ENCODE measurements at regions of chr19 and their contacts with region 1.

Region 1: DNA sequence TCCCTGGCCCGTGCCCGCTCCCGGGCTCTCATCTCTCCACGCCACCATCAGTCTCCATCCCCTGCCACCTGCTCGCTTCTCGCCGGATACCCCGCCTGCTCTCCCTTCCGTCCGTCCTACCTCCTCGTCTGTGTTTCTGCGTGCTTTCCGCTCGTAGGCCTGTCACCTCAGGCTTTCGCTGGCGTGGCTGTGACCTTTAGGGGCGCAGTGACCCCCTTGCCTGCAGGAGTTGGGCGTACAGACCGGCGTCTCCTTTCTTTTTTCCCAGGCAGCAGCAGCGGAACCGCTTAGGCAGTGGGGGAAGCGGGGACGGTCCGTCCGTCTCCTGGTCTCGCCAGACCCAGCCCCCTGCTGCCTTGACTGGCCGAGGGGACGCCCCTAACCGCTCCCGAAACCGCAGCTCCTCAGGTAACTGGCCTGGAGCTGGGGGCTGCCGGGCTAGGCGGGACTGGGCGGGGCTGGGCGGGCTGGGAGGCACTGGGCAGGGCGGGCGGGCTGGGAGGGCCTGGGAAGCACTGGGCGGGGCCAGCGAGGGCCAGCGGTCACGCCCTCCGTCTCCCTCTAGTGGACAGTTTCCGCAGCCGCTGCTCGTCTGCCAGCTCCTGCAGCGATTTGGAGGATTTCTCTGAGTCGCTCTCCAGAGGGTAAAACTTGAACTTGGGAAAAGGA is 6.3 kb downstream of the PGLYRP1 start:
- DNase-seq: no peak
- H3K4me3 ChIP-seq: peak overlapping the region; percentile 67 to 78 (median 70)
- H3K27ac ChIP-seq: peak overlapping the region in 2 of 4 donors; percentile 26 to 46
- H3K4me1 ChIP-seq: peaks cover 18 to 29% (median 28%) of the 10 kb centered on the region in 4 donors
- H3K27me3 ChIP-seq: peaks cover 0 to 50% (median 32%) of the 10 kb centered on the region in 4 donors
- CTCF ChIP-seq: peak; percentile 68 to 93 (median 84)
- EP300 ChIP-seq: no peak
- POLR2A ChIP-seq: no peak

Region 2: DNA sequence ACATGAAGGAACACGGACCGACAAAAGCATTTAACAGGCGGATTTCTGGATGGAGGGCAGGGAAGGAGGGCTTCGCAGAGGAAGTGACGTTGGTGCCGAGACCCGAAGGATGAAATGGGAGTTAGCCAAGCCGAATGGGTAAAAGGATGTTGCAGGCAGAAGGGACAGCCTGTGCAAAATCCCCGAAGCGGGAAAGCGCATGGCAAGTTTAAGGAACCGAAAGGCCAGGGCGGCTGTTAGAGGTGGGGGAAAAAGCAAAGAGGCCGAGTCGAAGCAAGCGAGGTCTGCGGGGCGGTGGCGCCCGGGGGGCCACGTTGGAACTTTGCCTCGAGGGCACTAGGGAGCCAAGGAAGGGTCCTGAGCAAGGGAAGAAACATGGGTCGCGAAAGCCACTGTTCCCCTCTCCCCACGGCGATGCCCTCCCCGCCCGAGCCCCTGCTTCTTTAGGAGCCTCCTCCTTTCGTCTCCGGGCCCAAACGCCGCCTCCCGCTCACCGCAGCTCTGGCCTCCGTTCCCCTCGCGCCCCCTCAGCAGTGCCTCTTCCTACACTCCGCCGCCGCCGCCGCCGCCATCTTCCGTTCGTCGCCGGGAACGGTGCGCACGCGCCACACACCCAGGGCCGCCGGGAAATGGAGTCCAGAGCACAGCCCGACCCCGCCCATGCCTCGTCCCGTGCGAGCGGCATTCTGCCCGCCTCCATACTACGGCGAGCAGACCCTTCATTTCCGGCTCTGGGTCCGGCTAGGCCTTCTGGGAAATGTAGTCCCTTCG is 153.8 kb before region 1 on chr19 and contains the start of gene SYMPK:
- intact Hi-C with region 1: loop called (anchors 10 kb)
- DNase-seq: peak; percentile 99
- H3K4me3 ChIP-seq: peak within 1 kb of the TSS; percentile 94 to 100 (median 98)
- H3K27ac ChIP-seq: peak within 1 kb of the TSS; percentile 94 to 97 (median 96)
- H3K4me1 ChIP-seq: peaks cover 24 to 36% (median 33%) of the 10 kb centered on the region in 4 donors
- H3K27me3 ChIP-seq: peaks cover 10 to 31% (median 16%) of the 10 kb centered on the region in 4 donors
- CTCF ChIP-seq: no peak
- EP300 ChIP-seq: no peak
- POLR2A ChIP-seq: peak; percentile 36
- total RNA-seq, gene SYMPK: 22.0 to 44.2 (median 36.6) TPM

Measured in esophagus muscularis mucosa (tissue), 4 donors.